Kidney (tissue), 22 donors: ENCODE measurements at regions of chr17 and their contacts with region 1.

Region 1: DNA sequence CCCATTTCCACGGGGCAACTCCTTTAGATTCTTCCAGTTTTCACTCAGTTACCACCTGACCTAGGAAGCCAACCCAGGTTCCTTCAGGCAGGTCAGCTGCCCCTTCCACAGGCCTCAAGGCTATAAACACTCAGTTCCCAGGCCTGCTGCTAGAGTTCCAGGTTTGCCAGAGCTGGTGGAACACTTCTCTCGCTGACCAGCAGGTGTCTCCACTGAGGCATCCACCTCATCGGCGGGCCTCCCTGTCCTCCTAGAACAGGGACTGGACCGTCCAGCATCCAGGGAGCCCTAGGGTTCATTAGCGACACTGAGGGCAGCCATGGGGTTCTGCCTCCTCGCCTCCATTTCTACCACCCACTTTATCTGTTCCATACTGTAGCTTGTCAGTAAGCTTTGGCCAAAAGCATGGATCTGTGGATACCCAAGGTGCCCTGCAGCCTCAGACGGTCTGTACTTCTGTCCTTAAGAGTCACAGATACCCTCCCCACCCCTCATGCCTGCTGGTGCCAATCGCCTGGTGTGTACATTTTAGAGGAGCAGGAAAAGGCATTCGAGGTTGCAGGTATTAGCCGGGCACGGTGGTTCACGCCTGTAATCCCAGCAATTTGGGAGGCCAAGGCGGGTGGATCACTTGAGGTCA is 29.0 kb downstream of the PIMREG start:
- DNase-seq: peak; percentile 86 to 89 (median 88)
- H3K4me3 ChIP-seq: no peak overlapping the region
- H3K27ac ChIP-seq: no peak overlapping the region
- H3K4me1 ChIP-seq: no peaks in the 10 kb centered on the region
- H3K27me3 ChIP-seq: no peaks in the 10 kb centered on the region
- CTCF ChIP-seq: peak; percentile 91

Region 2: GRCh38 chr17:6327007-6327406 is 146.2 kb before region 1 on chr17:
- intact Hi-C with region 1: no loop called
- DNase-seq: peak in 2 of 5 donors; percentile 12 to 58
- H3K4me3 ChIP-seq: no peak overlapping the region
- H3K27ac ChIP-seq: no peak overlapping the region
- H3K4me1 ChIP-seq: peaks cover 0 to 2% (median 0%) of the 10 kb centered on the region in 3 donors
- H3K27me3 ChIP-seq: no peaks in the 10 kb centered on the region
- CTCF ChIP-seq: no peak

Region 3: GRCh38 chr17:6567529-6568183 is 94.4 kb after region 1 on chr17:
- intact Hi-C with region 1: loop called (anchors 10 kb)
- DNase-seq: peak in 1 of 5 donors; percentile 28
- H3K4me3 ChIP-seq: no peak overlapping the region
- H3K27ac ChIP-seq: no peak overlapping the region
- H3K4me1 ChIP-seq: peaks cover 0 to 4% (median 0%) of the 10 kb centered on the region in 3 donors
- H3K27me3 ChIP-seq: no peaks in the 10 kb centered on the region
- CTCF ChIP-seq: no peak